ENCODE measurements at regions of chr1 and their contacts with region 1.

Region 1: DNA sequence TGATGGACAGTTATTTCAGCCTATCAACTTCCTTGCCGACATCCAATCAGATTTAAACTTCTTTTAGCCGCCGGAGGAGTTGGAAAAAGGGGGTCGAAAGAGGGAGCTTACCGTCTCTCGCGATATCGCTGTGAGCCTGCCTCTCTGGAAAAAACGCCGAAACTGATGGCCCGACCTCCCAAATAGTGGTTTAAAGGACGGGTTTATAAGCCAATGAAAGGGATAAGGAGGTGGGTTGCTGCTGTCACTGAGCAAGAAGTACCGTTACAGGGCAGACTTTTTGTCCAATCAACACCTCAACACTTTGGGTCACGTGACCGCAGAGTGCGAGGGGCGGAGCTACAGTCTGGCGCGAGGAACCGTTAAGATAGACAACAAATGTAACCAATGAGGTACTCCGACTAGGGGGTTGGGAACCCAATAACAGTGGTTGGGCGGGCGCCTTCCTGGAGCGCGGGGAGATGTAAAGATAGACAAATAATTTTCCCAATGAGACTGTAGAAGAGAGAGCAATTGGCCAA is at the start of gene RBM15:
- DNase-seq: peak; percentile 90 to 100 (median 95)
- ATAC-seq: peak; percentile 71
- H3K4me3 ChIP-seq: peak within 1 kb of the TSS; percentile 93
- H3K4me3 Mint-ChIP-seq: no peak within 1 kb of the TSS
- H3K27ac ChIP-seq: peak within 1 kb of the TSS; percentile 98 to 100
- H3K27ac Mint-ChIP-seq: no peak within 1 kb of the TSS
- H3K4me1 ChIP-seq: peaks cover 33% of the 10 kb centered on the region
- H3K4me1 Mint-ChIP-seq: peaks cover 59% of the 10 kb centered on the region
- H3K27me3 ChIP-seq: no peaks in the 10 kb centered on the region
- H3K27me3 Mint-ChIP-seq: no peaks in the 10 kb centered on the region
- CTCF ChIP-seq: no peak
- total RNA-seq, gene RBM15: 49.4 to 49.7 TPM

Region 2: GRCh38 chr1:110034451-110035235 is 304.3 kb before region 1 on chr1 and contains the start of gene STRIP1:
- CTCF ChIA-PET with region 1: no interaction called
- POLR2A ChIA-PET with region 1: interaction called, 33 read pairs
- intact Hi-C with region 1: loop called in 1 of 2 experiments (anchors 2 kb)
- DNase-seq: peak; percentile 85 to 98 (median 89)
- ATAC-seq: peak; percentile 95
- H3K4me3 ChIP-seq: peak within 1 kb of the TSS; percentile 84
- H3K4me3 Mint-ChIP-seq: peak within 1 kb of the TSS; percentile 98
- H3K27ac ChIP-seq: peak within 1 kb of the TSS; percentile 37 to 64
- H3K27ac Mint-ChIP-seq: peak within 1 kb of the TSS; percentile 81
- H3K4me1 ChIP-seq: peaks cover 41% of the 10 kb centered on the region
- H3K4me1 Mint-ChIP-seq: peaks cover 56% of the 10 kb centered on the region
- H3K27me3 ChIP-seq: no peaks in the 10 kb centered on the region
- H3K27me3 Mint-ChIP-seq: no peaks in the 10 kb centered on the region
- CTCF ChIP-seq: no peak
- total RNA-seq, gene STRIP1: 74.3 to 80.9 TPM

Region 3: GRCh38 chr1:110203021-110203661 is 135.8 kb before region 1 on chr1:
- CTCF ChIA-PET with region 1: interaction called, 62 read pairs
- POLR2A ChIA-PET with region 1: interaction called, 199 read pairs
- intact Hi-C with region 1: loop called in 1 of 2 experiments (anchors 2 kb)
- DNase-seq: peak; percentile 22 to 88 (median 60)
- ATAC-seq: peak; percentile 76
- H3K4me3 ChIP-seq: no peak overlapping the region
- H3K4me3 Mint-ChIP-seq: no peak overlapping the region
- H3K27ac ChIP-seq: peak overlapping the region in 1 of 2 donors; percentile 30
- H3K27ac Mint-ChIP-seq: peak overlapping the region; percentile 90
- H3K4me1 ChIP-seq: peaks cover 24% of the 10 kb centered on the region
- H3K4me1 Mint-ChIP-seq: peaks cover 36% of the 10 kb centered on the region
- H3K27me3 ChIP-seq: no peaks in the 10 kb centered on the region
- H3K27me3 Mint-ChIP-seq: no peaks in the 10 kb centered on the region
- CTCF ChIP-seq: peak; percentile 78

Region 4: DNA sequence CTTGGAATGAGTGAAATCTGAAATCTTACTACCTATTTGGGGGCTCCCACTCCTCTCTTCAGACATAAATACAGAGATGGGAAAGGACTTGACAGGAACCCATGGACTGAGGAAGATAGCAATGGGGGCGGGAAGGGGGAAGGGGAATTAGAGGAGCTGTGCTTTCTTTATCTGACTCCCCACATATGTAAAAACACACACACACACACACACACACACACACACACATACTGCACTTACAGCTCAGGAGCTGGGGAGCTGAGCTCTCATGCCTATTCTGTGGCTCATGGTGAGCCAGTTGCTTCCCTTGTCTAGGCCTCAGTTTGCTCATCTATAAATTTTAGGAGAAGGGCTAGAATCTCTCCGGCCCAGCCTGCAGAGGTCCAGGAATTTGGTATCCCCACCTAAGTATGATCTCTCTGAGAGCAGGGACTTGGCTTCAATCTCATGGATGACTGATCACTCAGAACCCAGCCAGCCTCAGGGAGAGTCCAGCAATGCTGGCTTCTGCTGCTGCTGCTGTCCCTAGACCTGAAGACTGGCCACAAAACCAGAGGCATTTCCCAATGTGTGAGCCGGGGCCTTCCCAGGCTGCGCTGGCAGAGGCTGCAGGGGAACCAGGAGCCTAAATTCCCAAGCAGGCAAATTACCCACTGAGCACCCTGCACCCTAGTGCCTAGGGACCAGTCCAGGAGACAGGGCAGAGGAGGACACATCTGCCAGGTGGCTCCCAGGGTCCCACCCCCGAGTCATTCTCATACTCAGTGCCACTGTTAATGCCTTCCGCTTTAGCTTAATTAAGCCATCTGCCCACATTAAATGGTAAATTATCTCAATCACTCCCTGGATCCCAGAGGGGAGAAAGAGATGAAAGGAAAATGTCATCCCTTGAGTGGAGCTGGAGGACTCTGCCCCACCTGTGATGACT is 57.3 kb before region 1 on chr1:
- CTCF ChIA-PET with region 1: no interaction called
- POLR2A ChIA-PET with region 1: no interaction called
- intact Hi-C with region 1: no loop called
- DNase-seq: no peak
- ATAC-seq: no peak
- H3K4me3 ChIP-seq: no peak overlapping the region
- H3K4me3 Mint-ChIP-seq: no peak overlapping the region
- H3K27ac ChIP-seq: no peak overlapping the region
- H3K27ac Mint-ChIP-seq: no peak overlapping the region
- H3K4me1 ChIP-seq: no peaks in the 10 kb centered on the region
- H3K4me1 Mint-ChIP-seq: no peaks in the 10 kb centered on the region
- H3K27me3 ChIP-seq: no peaks in the 10 kb centered on the region
- H3K27me3 Mint-ChIP-seq: peaks cover 4% of the 10 kb centered on the region
- CTCF ChIP-seq: no peak

Region 5: DNA sequence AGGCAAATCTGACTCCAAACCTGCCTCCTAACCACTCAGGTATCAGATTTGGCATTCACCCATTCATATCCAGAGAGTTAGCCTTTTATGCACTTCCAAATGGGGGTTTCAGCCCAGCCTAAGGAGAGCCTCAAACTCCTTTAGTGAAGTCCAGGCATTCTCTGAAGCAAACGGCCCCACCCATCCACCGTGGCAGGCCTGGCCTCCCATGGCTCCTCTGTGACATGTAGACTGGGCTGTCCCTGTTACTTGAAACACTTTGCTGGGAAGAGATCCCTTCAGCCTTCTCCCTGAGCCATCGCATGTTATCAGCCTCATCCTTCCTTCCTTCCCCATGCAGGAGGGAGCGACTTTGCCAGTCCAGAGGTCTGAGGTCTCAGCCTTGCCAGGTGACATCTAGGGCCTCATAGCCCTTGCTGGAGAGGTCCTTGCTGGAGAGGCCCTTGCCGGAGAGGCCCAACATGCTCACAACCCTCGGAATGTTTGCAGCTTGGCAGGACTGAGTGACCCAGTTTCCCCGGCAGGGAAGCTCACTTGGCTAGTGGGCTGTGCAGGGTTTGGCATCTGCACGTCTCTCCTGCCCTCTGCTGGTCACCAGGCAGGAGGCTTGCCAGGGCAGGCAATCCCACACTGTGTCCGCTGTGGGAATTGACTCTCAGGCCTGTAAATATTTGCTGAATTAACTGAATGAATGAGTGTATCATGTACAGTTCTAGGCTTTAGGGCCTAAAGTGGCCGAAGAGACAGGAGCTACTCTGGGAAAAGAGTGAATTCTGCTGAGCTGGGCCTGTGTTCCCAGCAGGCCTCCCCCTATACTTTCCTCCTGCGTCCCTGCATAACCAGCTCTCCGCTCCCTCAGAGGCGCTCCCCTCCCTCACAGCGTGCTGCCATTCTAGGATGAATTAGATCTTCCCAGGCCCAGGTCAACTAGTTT is 26.5 kb before region 1 on chr1:
- CTCF ChIA-PET with region 1: interaction called, 7 read pairs
- POLR2A ChIA-PET with region 1: interaction called, 12 read pairs
- intact Hi-C with region 1: no loop called
- DNase-seq: peak; percentile 62 to 86 (median 70)
- ATAC-seq: peak; percentile 99
- H3K4me3 ChIP-seq: no peak overlapping the region
- H3K4me3 Mint-ChIP-seq: no peak overlapping the region
- H3K27ac ChIP-seq: no peak overlapping the region
- H3K27ac Mint-ChIP-seq: no peak overlapping the region
- H3K4me1 ChIP-seq: peaks cover 7% of the 10 kb centered on the region
- H3K4me1 Mint-ChIP-seq: no peaks in the 10 kb centered on the region
- H3K27me3 ChIP-seq: no peaks in the 10 kb centered on the region
- H3K27me3 Mint-ChIP-seq: no peaks in the 10 kb centered on the region
- CTCF ChIP-seq: peak; percentile 92

Region 6: GRCh38 chr1:110384581-110385321 is 45.8 kb after region 1 on chr1:
- CTCF ChIA-PET with region 1: interaction called, 3 read pairs
- POLR2A ChIA-PET with region 1: interaction called, 17 read pairs
- intact Hi-C with region 1: no loop called
- DNase-seq: no peak
- ATAC-seq: no peak
- H3K4me3 ChIP-seq: no peak overlapping the region
- H3K4me3 Mint-ChIP-seq: no peak overlapping the region
- H3K27ac ChIP-seq: no peak overlapping the region
- H3K27ac Mint-ChIP-seq: peak overlapping the region; percentile 76
- H3K4me1 ChIP-seq: peaks cover 16% of the 10 kb centered on the region
- H3K4me1 Mint-ChIP-seq: peaks cover 17% of the 10 kb centered on the region
- H3K27me3 ChIP-seq: no peaks in the 10 kb centered on the region
- H3K27me3 Mint-ChIP-seq: no peaks in the 10 kb centered on the region
- CTCF ChIP-seq: no peak

Region 7: DNA sequence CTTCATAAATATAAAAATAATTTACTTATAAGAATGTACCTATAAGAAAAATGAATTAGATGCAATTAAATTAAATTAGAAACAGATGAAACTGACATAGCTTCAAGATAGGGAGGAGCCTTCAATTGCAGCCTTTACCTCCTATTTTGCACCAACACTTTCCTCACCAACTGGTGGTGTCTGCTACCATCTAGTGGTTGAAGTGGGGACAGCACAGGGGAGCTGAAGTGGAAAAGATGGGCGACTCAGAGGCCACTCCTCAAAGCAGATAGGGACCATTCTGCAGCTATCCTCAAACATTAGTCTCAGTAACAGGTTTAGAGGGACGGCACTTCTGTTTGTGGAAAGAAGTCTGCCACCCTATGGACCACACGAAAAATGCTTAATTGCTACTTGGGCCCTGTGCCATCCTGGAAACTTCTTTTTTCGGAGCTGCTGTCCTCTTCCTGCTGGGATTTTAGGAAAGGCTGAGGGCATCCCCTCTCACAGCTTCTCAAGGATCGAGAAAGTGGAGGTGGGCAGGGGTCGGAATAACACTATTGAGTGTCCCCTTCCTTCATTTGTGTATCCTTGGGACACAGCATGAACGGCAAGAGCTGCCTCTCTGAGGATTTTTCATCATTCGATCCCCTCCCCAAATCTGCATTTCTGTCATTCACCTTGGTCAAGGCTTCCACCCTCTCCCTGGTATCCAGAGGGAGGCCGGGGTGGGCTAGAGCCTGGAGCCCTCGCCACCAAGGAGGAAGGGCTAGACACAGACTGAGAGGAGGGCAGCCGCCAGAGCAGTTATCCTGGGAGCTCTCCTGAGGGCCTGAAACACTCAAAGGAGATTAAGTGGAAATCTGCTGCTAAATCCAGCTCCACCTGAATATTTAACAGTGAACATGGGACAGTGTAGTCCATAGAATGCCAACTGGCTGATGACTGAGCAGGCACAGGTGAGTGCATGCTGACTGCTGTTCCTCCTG is 121.6 kb after region 1 on chr1:
- CTCF ChIA-PET with region 1: interaction called, 13 read pairs
- POLR2A ChIA-PET with region 1: interaction called, 9 read pairs
- intact Hi-C with region 1: no loop called
- DNase-seq: peak; percentile 72 to 89 (median 82)
- ATAC-seq: peak; percentile 99
- H3K4me3 ChIP-seq: no peak overlapping the region
- H3K4me3 Mint-ChIP-seq: no peak overlapping the region
- H3K27ac ChIP-seq: no peak overlapping the region
- H3K27ac Mint-ChIP-seq: no peak overlapping the region
- H3K4me1 ChIP-seq: no peaks in the 10 kb centered on the region
- H3K4me1 Mint-ChIP-seq: no peaks in the 10 kb centered on the region
- H3K27me3 ChIP-seq: peaks cover 0 to under 1% of the 10 kb centered on the region in 2 experiments
- H3K27me3 Mint-ChIP-seq: no peaks in the 10 kb centered on the region
- CTCF ChIP-seq: peak; percentile 95

Measured in CD4-positive, alpha-beta T cell (primary cell).